ENCODE measurements at regions of chr17 and their contacts with region 1.

Region 1: DNA sequence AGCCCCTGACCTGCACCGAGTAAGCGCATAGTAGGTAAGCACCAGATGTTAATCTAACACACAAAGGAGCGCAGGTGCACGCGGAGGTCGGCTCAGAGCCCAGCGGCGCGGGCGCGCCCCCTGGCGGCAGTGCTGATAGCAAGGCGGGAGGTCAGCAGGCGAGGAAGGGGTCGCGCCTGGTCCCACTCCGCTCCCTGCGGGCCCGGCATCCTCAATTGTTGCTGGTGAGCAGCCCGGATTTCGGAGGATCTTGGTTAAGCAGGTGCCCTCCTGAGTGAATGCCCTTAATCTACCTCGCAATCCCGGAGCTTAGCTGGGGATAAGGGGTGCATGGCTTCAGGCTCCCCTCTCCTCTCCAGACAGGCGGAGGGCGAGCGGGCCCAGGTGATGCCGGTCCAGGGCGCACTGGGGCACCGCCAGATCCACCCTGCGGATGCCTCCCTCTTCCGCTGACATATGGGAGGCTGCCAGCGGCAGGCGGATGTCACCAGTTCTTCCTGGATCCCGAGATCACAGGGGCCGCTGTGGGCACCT is 4.0 kb upstream of the WNT3 start:
- DNase-seq: peak; percentile 43

Region 2: DNA sequence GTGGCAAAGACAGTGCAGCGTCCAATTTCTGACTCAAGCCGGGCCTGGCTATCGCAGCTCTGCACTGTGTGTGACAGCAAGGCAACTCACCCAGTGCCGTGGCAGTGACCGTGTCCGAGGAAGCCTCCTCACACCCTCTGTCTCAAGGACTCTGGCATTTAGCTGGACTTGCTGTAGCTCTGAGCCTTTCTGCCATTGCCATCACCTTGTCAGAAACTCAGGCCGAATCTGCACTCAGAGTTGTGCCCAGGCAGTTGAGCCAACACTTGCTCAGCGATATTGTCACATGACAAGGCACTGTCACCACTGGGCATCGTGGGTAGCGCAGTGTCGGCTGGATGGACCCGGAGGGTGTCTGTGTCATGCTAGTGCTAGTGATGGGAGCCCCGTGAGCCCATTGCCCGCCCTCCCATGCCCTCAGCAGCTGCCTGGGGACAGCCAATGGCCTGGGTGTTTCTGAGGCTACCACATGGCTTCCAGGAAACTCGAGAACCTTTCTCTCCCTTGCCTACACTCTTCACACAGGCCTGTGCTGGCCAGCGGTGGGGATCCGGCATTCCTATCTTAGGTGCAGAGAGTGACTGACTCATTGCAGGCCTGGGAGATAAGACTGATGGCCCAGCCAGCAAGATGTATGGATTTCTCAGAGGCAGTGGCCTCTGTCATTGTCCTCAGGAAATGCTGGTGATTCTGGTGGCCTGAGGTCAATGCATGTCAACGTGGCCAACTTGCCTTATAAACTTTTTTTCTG is 845.5 kb before region 1 on chr17:
- in situ Hi-C with region 1: loop called (anchors 25 kb)
- DNase-seq: no peak

Region 3: GRCh38 chr17:46758623-46759022 is 63.8 kb before region 1 on chr17:
- in situ Hi-C with region 1: no loop called
- DNase-seq: no peak

Measured in KBM-7 (cell line).